ENCODE measurements at regions of chr10 and their contacts with region 1.

Region 1: GRCh38 chr10:113872139-113873030 is 17.9 kb downstream of the NHLRC2 start:
- DNase-seq: no peak
- CTCF ChIP-seq: peak; percentile 48

Region 2: GRCh38 chr10:113385021-113385999 is 487.1 kb before region 1 on chr10:
- CTCF ChIA-PET with region 1: no interaction called
- POLR2A ChIA-PET with region 1: no interaction called
- DNase-seq: peak; percentile 53
- CTCF ChIP-seq: peak; percentile 67

Region 3: DNA sequence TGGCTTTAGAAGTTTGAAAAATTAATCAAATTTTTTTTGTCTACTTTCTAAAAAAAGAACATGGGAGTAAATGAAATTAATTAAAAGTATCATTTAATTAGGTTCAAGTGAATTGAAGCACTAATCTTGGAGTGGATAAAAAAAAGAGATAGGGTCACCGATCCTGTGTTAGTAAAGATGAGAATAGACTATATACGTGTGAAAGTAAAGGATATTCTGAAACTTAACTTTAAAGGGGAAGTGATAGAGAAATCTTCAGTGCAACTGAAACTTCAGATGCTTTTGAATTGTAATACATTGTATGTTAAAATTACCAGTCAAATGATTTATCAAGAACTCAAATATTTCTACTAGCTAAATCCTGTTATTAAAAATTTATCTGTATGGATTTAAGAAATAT is 13.1 kb before region 1 on chr10:
- CTCF ChIA-PET with region 1: interaction called, 12 read pairs
- POLR2A ChIA-PET with region 1: no interaction called
- DNase-seq: peak; percentile 26
- CTCF ChIP-seq: no peak